ENCODE measurements at regions of chr17 and their contacts with region 1.

Region 1: GRCh38 chr17:29124117-29124924 is 55.9 kb downstream of the MYO18A start:
- DNase-seq: peak in 9 of 14 experiments; percentile 14 to 74 (median 34)
- ATAC-seq: peak; percentile 97
- H3K4me3 ChIP-seq: no peak overlapping the region
- H3K4me3 Mint-ChIP-seq: no peak overlapping the region
- H3K27ac ChIP-seq: no peak overlapping the region
- H3K27ac Mint-ChIP-seq: no peak overlapping the region
- H3K4me1 ChIP-seq: peaks cover 18% of the 10 kb centered on the region
- H3K4me1 Mint-ChIP-seq: peaks cover 4% of the 10 kb centered on the region
- H3K27me3 ChIP-seq: no peaks in the 10 kb centered on the region
- H3K27me3 Mint-ChIP-seq: no peaks in the 10 kb centered on the region
- CTCF ChIP-seq: peak; percentile 68

Region 2: GRCh38 chr17:29102741-29103181 is 21.6 kb before region 1 on chr17:
- CTCF ChIA-PET with region 1: no interaction called
- POLR2A ChIA-PET with region 1: no interaction called
- intact Hi-C with region 1: no loop called
- DNase-seq: no peak
- ATAC-seq: no peak
- H3K4me3 ChIP-seq: no peak overlapping the region
- H3K4me3 Mint-ChIP-seq: no peak overlapping the region
- H3K27ac ChIP-seq: no peak overlapping the region
- H3K27ac Mint-ChIP-seq: no peak overlapping the region
- H3K4me1 ChIP-seq: peaks cover 4% of the 10 kb centered on the region
- H3K4me1 Mint-ChIP-seq: no peaks in the 10 kb centered on the region
- H3K27me3 ChIP-seq: no peaks in the 10 kb centered on the region
- H3K27me3 Mint-ChIP-seq: no peaks in the 10 kb centered on the region
- CTCF ChIP-seq: no peak

Region 3: DNA sequence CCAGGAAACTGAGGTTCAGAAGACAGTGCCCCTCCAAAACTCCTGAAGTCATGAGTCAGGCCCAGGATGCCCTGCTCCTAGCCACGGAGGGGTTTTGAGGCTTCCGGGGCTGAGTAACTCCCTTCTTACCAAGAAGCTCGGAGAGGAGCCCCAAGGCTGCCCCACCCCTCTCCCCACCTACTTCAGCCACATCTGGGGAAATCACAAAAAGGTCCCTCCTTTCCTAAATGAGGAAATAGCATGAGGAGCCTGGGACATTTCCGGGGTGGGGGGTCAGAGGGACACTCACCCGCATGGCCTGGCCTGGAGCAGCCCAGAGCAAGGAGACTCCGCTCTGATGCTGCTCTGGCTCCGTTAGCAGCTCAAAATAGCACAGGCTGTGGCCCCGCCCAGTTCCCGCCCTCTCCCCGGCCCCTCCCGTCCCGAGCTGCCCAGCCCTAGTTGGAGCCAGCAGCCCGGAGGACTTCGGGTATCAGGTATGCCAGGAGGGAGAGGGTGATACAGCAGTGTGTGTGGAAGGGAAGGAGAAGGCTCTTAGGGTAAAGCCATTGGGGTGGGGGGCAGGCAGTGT is 15.8 kb after region 1 on chr17:
- CTCF ChIA-PET with region 1: interaction called, 94 read pairs
- POLR2A ChIA-PET with region 1: interaction called, 24 read pairs
- intact Hi-C with region 1: loop called in 1 of 2 experiments (anchors 1 kb)
- DNase-seq: peak; percentile 57 to 90 (median 78)
- ATAC-seq: peak; percentile 53
- H3K4me3 ChIP-seq: peak overlapping the region; percentile 64
- H3K4me3 Mint-ChIP-seq: peak overlapping the region; percentile 91
- H3K27ac ChIP-seq: peak overlapping the region; percentile 78 to 82
- H3K27ac Mint-ChIP-seq: peak overlapping the region; percentile 96
- H3K4me1 ChIP-seq: peaks cover 80% of the 10 kb centered on the region
- H3K4me1 Mint-ChIP-seq: peaks cover 70% of the 10 kb centered on the region
- H3K27me3 ChIP-seq: no peaks in the 10 kb centered on the region
- H3K27me3 Mint-ChIP-seq: no peaks in the 10 kb centered on the region
- CTCF ChIP-seq: no peak

Region 4: GRCh38 chr17:29180034-29180787 is 55.9 kb after region 1 on chr17 and contains the start of gene MYO18A:
- CTCF ChIA-PET with region 1: interaction called, 36 read pairs
- POLR2A ChIA-PET with region 1: interaction called, 12 read pairs
- intact Hi-C with region 1: loop called (anchors 1 kb)
- DNase-seq: peak; percentile 53 to 90 (median 76)
- ATAC-seq: peak; percentile 91
- H3K4me3 ChIP-seq: peak within 1 kb of the TSS; percentile 21
- H3K4me3 Mint-ChIP-seq: peak within 1 kb of the TSS; percentile 75
- H3K27ac ChIP-seq: no peak within 1 kb of the TSS
- H3K27ac Mint-ChIP-seq: no peak within 1 kb of the TSS
- H3K4me1 ChIP-seq: peaks cover 45% of the 10 kb centered on the region
- H3K4me1 Mint-ChIP-seq: peaks cover 34% of the 10 kb centered on the region
- H3K27me3 ChIP-seq: no peaks in the 10 kb centered on the region
- H3K27me3 Mint-ChIP-seq: no peaks in the 10 kb centered on the region
- CTCF ChIP-seq: peak; percentile 75
- total RNA-seq, gene MYO18A: 87.0 to 90.1 TPM

Region 5: GRCh38 chr17:29219378-29220047 is 95.2 kb after region 1 on chr17:
- CTCF ChIA-PET with region 1: interaction called, 19 read pairs
- POLR2A ChIA-PET with region 1: interaction called, 5 read pairs
- intact Hi-C with region 1: loop called in 1 of 2 experiments (anchors 1 kb)
- DNase-seq: peak; percentile 52 to 85 (median 60)
- ATAC-seq: peak; percentile 90
- H3K4me3 ChIP-seq: no peak overlapping the region
- H3K4me3 Mint-ChIP-seq: no peak overlapping the region
- H3K27ac ChIP-seq: no peak overlapping the region
- H3K27ac Mint-ChIP-seq: no peak overlapping the region
- H3K4me1 ChIP-seq: peaks cover 8% of the 10 kb centered on the region
- H3K4me1 Mint-ChIP-seq: peaks cover 9% of the 10 kb centered on the region
- H3K27me3 ChIP-seq: no peaks in the 10 kb centered on the region
- H3K27me3 Mint-ChIP-seq: no peaks in the 10 kb centered on the region
- CTCF ChIP-seq: peak; percentile 90

Measured in CD4-positive, alpha-beta T cell (primary cell).